Activated naive CD4-positive, alpha-beta T cell treated with anti-CD3 and anti-CD28 coated beads for 36 hours (primary cell): ENCODE measurements at regions of chr20 and their contacts with region 1.

Region 1: GRCh38 chr20:32521780-32522525 is 63.2 kb downstream of the NOL4L start:
- DNase-seq: peak; percentile 81
- H3K4me3 Mint-ChIP-seq: no peak overlapping the region
- H3K27ac Mint-ChIP-seq: peak overlapping the region; percentile 81
- H3K4me1 Mint-ChIP-seq: peaks cover 56% of the 10 kb centered on the region
- H3K27me3 Mint-ChIP-seq: no peaks in the 10 kb centered on the region

Region 2: GRCh38 chr20:32484958-32485769 is 36.8 kb before region 1 on chr20:
- CTCF ChIA-PET with region 1: interaction called, 14 read pairs
- intact Hi-C with region 1: no loop called
- DNase-seq: peak; percentile 95
- H3K4me3 Mint-ChIP-seq: peak overlapping the region; percentile 84
- H3K27ac Mint-ChIP-seq: peak overlapping the region; percentile 93
- H3K4me1 Mint-ChIP-seq: peaks cover 39% of the 10 kb centered on the region
- H3K27me3 Mint-ChIP-seq: no peaks in the 10 kb centered on the region

Region 3: DNA sequence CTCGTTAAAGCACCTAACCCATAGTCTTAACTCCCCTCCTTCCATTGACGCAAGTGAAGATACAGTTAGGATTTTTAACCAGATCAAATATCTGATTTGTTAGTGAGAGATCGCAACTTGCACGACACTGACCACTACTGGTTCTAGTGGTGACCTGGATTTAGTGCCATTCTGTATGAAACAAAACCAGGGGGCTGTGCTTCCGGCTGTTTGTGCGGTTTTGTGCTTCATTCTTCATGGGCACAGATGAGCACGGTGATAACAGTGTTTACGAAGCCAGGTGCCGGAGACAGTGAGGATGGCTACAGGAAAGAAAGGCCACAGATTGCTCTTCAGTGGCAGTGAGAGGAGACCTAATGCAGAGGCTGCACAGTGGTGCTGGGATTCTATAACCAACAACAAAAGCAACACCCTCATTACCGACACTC is 12.3 kb before region 1 on chr20:
- CTCF ChIA-PET with region 1: interaction called, 27 read pairs
- intact Hi-C with region 1: loop called (anchors 1 kb)
- DNase-seq: peak; percentile 82
- H3K4me3 Mint-ChIP-seq: peak overlapping the region; percentile 71
- H3K27ac Mint-ChIP-seq: peak overlapping the region; percentile 90
- H3K4me1 Mint-ChIP-seq: peaks cover 90% of the 10 kb centered on the region
- H3K27me3 Mint-ChIP-seq: no peaks in the 10 kb centered on the region

Region 4: DNA sequence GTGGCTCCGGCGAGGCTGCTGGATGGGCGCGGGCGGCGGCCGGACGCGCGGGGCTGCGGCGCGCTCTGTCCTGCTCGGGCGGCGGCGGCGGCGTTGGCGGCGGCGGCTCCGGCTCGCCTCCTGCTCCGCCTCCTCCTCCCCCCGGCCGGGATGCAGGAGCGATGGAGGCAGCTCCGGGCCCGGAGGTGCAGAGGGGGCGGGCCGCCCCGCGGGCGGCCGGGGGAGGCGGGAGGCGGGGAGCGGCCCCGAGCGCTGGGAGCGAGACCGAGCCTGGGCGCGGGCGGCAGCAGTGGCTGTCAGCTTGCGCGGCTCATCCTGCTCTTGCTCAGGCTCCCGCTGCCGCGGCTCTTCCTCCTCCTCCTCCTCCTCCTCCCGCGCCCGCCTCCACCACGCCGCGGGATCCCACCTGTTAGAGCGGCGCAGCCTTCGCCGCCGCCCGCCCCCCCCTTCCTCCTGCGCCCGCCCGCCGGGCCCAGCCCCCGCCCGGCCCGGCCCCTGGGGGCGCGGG is 63.1 kb after region 1 on chr20 and contains the start of gene NOL4L:
- CTCF ChIA-PET with region 1: interaction called, 19 read pairs
- intact Hi-C with region 1: no loop called
- DNase-seq: peak; percentile 57
- H3K4me3 Mint-ChIP-seq: peak within 1 kb of the TSS; percentile 74
- H3K27ac Mint-ChIP-seq: peak within 1 kb of the TSS; percentile 60
- H3K4me1 Mint-ChIP-seq: peaks cover 33% of the 10 kb centered on the region
- H3K27me3 Mint-ChIP-seq: no peaks in the 10 kb centered on the region
- total RNA-seq, gene NOL4L: 24.8 to 29.2 TPM

Region 5: GRCh38 chr20:32626859-32627636 is 105.1 kb after region 1 on chr20:
- CTCF ChIA-PET with region 1: interaction called, 11 read pairs
- intact Hi-C with region 1: no loop called
- DNase-seq: no peak
- H3K4me3 Mint-ChIP-seq: no peak overlapping the region
- H3K27ac Mint-ChIP-seq: no peak overlapping the region
- H3K4me1 Mint-ChIP-seq: peaks cover 8% of the 10 kb centered on the region
- H3K27me3 Mint-ChIP-seq: peaks cover 3% of the 10 kb centered on the region

Region 6: DNA sequence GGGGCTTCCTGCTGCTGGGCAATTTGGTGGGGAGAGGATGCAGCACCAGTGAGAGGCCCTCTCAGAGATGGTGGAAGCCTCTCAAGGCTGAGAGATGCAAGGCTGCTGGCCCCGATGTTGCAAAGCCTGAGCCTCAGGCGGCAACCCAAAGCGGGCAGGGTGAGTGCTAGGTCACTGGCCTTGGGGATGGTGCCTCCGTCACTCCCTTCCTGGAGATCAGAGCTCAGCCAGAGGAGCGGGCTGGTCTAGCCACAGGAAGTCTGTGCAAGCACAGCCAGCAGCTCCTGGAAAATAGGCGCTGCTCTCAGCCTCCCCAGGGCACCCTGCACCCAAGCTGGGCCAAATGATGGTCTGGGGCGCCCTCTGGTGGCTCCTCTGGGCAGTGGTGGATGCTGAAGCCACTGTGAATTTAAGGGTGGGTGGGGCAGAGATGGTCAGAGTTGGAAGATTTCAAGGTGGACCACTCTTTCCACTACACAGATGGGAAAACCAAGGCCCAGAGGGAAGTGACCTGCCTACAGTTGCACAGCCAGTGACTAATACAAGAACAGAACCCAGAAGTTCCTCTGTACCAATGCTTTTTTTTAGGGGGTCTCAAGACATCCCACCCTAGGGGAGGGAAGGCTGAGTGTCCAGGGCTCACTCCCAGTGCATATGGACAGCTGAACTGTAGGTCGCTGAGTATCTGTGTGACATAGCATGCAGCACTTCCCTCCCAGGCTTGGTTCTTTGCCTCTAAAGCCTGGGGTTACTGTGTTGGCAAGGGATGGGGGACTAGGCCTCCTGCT is 131.0 kb after region 1 on chr20:
- CTCF ChIA-PET with region 1: interaction called, 330 read pairs
- intact Hi-C with region 1: loop called (anchors 1 kb)
- DNase-seq: peak; percentile 93
- H3K4me3 Mint-ChIP-seq: no peak overlapping the region
- H3K27ac Mint-ChIP-seq: no peak overlapping the region
- H3K4me1 Mint-ChIP-seq: peaks cover 8% of the 10 kb centered on the region
- H3K27me3 Mint-ChIP-seq: no peaks in the 10 kb centered on the region

Region 7: GRCh38 chr20:32661820-32662528 is 140.0 kb after region 1 on chr20:
- CTCF ChIA-PET with region 1: interaction called, 330 read pairs
- intact Hi-C with region 1: no loop called
- DNase-seq: no peak
- H3K4me3 Mint-ChIP-seq: no peak overlapping the region
- H3K27ac Mint-ChIP-seq: no peak overlapping the region
- H3K4me1 Mint-ChIP-seq: peaks cover 3% of the 10 kb centered on the region
- H3K27me3 Mint-ChIP-seq: no peaks in the 10 kb centered on the region